PC-9 (cell line): ENCODE measurements at regions of chr21 and their contacts with region 1.

Region 1: GRCh38 chr21:45140346-45140940 is 66.1 kb downstream of the ADARB1 start:
- DNase-seq: peak; percentile 64 to 73
- H3K4me3 ChIP-seq: no peak overlapping the region
- H3K27ac ChIP-seq: no peak overlapping the region
- H3K4me1 ChIP-seq: no peaks in the 10 kb centered on the region; the same call in 1 of the 2 replicates
- H3K27me3 ChIP-seq: no peaks in the 10 kb centered on the region
- CTCF ChIP-seq: peak; percentile 75

Region 2: DNA sequence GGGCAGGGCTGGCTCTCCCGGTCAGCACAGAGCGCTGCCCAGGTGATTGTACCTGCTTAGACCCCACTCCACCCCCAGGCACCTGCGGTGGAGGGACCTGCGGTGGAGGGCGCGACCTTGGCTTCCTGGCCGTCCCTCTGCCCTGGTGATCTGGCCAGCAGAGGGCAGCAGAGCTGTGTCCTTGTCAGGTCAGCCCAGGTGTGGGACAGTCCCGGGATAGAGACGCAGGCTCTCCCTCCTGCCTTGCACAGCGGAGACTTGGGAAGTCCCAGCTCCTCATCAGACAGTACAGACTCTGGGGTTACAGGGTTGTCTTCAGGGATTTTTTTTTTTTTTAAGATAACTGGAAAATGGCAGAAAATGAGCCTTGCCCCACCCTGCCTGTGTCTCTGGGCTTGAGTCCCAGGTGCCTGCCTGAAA is 190.7 kb before region 1 on chr21:
- CTCF ChIA-PET with region 1: interaction called, 11 read pairs
- POLR2A ChIA-PET with region 1: no interaction called
- intact Hi-C with region 1: no loop called
- DNase-seq: peak in 1 of 2 experiments; percentile 74
- H3K4me3 ChIP-seq: no peak overlapping the region
- H3K27ac ChIP-seq: no peak overlapping the region
- H3K4me1 ChIP-seq: no peaks in the 10 kb centered on the region
- H3K27me3 ChIP-seq: no peaks in the 10 kb centered on the region
- CTCF ChIP-seq: peak; percentile 86

Region 3: GRCh38 chr21:45041351-45041805 is 99.1 kb before region 1 on chr21:
- CTCF ChIA-PET with region 1: no interaction called
- POLR2A ChIA-PET with region 1: no interaction called
- intact Hi-C with region 1: no loop called
- DNase-seq: no peak
- H3K4me3 ChIP-seq: no peak overlapping the region
- H3K27ac ChIP-seq: no peak overlapping the region
- H3K4me1 ChIP-seq: no peaks in the 10 kb centered on the region
- H3K27me3 ChIP-seq: peaks cover 17% of the 10 kb centered on the region
- CTCF ChIP-seq: no peak

Region 4: DNA sequence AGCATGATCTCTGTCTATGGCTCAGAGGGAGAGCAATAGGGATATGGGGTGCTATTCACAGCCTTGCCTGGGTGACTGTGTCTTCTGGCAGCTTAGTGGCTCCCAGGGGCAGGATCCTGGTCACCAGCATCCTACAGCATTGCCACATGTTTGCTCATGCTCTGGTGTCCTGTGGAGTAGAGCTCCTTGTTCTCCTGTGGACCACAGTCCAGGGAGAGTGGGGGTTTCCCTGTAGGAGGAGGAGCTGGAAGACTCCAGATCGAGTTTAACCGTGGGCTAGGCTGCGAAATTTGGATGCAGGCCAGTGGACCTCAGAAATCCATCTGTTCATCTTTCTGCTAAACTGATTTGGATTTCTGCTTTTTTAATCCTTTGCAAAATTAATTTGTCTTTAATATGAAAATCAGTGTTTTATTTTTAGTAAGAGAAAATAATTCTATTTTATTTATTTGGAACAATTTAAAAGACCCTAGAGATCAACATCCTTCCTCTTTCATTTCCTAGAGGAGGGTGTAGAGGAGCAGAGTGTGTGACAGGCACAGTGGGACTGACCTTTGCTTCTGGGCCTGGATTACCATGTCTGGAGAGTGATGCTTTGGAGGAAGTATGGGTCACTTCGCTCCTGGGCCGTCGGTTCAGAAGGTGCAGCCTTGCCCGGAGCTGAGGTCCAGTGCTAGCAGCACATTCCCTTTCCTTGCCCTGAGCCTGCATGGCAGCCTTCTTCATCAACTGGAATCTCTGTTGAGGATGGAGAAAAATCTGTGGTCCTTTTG is 48.7 kb before region 1 on chr21:
- CTCF ChIA-PET with region 1: no interaction called
- POLR2A ChIA-PET with region 1: no interaction called
- intact Hi-C with region 1: no loop called
- DNase-seq: no peak
- H3K4me3 ChIP-seq: no peak overlapping the region
- H3K27ac ChIP-seq: no peak overlapping the region
- H3K4me1 ChIP-seq: no peaks in the 10 kb centered on the region
- H3K27me3 ChIP-seq: no peaks in the 10 kb centered on the region
- CTCF ChIP-seq: no peak

Region 5: GRCh38 chr21:45248893-45249381 is 108.5 kb after region 1 on chr21:
- CTCF ChIA-PET with region 1: no interaction called
- POLR2A ChIA-PET with region 1: no interaction called
- intact Hi-C with region 1: loop called (anchors 10 kb)
- DNase-seq: peak in 1 of 2 experiments; percentile 26
- H3K4me3 ChIP-seq: no peak overlapping the region
- H3K27ac ChIP-seq: no peak overlapping the region
- H3K4me1 ChIP-seq: no peaks in the 10 kb centered on the region
- H3K27me3 ChIP-seq: peaks cover 13% of the 10 kb centered on the region
- CTCF ChIP-seq: no peak

Region 6: GRCh38 chr21:45292399-45293219 is 152.2 kb after region 1 on chr21:
- CTCF ChIA-PET with region 1: interaction called, 3 read pairs
- POLR2A ChIA-PET with region 1: no interaction called
- intact Hi-C with region 1: loop called (anchors 1 kb)
- DNase-seq: peak; percentile 41 to 79
- H3K4me3 ChIP-seq: no peak overlapping the region
- H3K27ac ChIP-seq: no peak overlapping the region
- H3K4me1 ChIP-seq: no peaks in the 10 kb centered on the region
- H3K27me3 ChIP-seq: no peaks in the 10 kb centered on the region
- CTCF ChIP-seq: peak; percentile 87

Region 7: GRCh38 chr21:45427331-45428271 is 287.2 kb after region 1 on chr21:
- CTCF ChIA-PET with region 1: no interaction called
- POLR2A ChIA-PET with region 1: no interaction called
- intact Hi-C with region 1: loop called (anchors 5 kb)
- DNase-seq: peak; percentile 75 to 91
- H3K4me3 ChIP-seq: no peak overlapping the region
- H3K27ac ChIP-seq: no peak overlapping the region
- H3K4me1 ChIP-seq: peaks cover 12% of the 10 kb centered on the region
- H3K27me3 ChIP-seq: no peaks in the 10 kb centered on the region
- CTCF ChIP-seq: no peak

Region 8: GRCh38 chr21:45596704-45597318 is 456.4 kb after region 1 on chr21:
- CTCF ChIA-PET with region 1: interaction called, 3 read pairs
- POLR2A ChIA-PET with region 1: no interaction called
- intact Hi-C with region 1: loop called (anchors 2 kb)
- DNase-seq: peak in 1 of 2 experiments; percentile 61
- H3K4me3 ChIP-seq: no peak overlapping the region
- H3K27ac ChIP-seq: no peak overlapping the region
- H3K4me1 ChIP-seq: no peaks in the 10 kb centered on the region
- H3K27me3 ChIP-seq: peaks cover 40% of the 10 kb centered on the region
- CTCF ChIP-seq: peak; percentile 77

Region 9: GRCh38 chr21:45820171-45821091 is 680.0 kb after region 1 on chr21:
- CTCF ChIA-PET with region 1: no interaction called
- POLR2A ChIA-PET with region 1: no interaction called
- intact Hi-C with region 1: loop called (anchors 1 kb)
- DNase-seq: peak; percentile 58 to 68
- H3K4me3 ChIP-seq: no peak overlapping the region
- H3K27ac ChIP-seq: no peak overlapping the region
- H3K4me1 ChIP-seq: peaks cover 16% of the 10 kb centered on the region; the same call in 1 of the 2 replicates
- H3K27me3 ChIP-seq: peaks cover 21% of the 10 kb centered on the region
- CTCF ChIP-seq: peak; percentile 81